HCT116 (cell line): ENCODE measurements at regions of chr19 and their contacts with region 1.

Region 1: DNA sequence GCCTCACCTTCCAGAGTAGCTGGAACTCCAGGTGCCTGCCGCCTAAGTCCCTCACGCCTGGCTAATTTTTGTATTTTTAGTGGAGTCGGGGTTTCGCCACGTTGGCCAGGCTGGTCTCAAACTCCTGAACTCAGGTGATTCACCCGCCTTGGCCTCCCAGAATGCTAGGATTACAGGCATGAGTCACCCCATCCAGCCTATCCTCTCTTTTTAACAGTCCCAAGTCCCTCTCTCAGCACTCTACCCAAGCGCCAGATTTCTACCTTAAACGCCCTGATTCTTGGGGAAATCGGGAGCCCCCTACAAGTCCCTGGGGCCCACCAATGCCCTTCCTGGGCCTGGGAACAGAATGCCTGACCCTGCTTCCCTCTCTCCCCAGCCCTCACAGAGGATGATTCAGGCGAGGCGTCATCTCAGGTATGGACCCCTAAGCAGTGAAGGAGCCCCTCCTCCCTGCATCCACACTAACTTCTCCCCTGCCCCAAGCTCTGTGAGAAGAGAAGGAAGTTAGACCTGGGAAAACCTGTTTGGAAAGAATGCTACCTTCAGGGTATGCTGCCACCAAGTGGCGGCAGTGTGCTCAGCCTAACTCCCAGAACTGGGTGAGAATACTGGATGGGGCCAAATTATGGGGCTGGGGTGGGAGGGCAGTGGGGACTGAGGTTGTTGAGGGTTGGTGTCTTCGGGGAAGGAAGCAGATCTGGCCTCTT is 20.8 kb upstream of the EBI3 start:
- DNase-seq: peak; percentile 66
- ATAC-seq: peak; percentile 77
- H3K4me3 ChIP-seq: peak overlapping the region; percentile 40 to 48
- H3K27ac ChIP-seq: peak overlapping the region; percentile 70
- H3K4me1 ChIP-seq: peaks cover 21 to 40% of the 10 kb centered on the region in 2 experiments
- H3K27me3 ChIP-seq: no peaks in the 10 kb centered on the region
- CTCF ChIP-seq: peak; percentile 76 to 78 (median 77)
- POLR2A ChIP-seq: no peak
- RAD21 ChIP-seq: peak; percentile 77

Region 2: DNA sequence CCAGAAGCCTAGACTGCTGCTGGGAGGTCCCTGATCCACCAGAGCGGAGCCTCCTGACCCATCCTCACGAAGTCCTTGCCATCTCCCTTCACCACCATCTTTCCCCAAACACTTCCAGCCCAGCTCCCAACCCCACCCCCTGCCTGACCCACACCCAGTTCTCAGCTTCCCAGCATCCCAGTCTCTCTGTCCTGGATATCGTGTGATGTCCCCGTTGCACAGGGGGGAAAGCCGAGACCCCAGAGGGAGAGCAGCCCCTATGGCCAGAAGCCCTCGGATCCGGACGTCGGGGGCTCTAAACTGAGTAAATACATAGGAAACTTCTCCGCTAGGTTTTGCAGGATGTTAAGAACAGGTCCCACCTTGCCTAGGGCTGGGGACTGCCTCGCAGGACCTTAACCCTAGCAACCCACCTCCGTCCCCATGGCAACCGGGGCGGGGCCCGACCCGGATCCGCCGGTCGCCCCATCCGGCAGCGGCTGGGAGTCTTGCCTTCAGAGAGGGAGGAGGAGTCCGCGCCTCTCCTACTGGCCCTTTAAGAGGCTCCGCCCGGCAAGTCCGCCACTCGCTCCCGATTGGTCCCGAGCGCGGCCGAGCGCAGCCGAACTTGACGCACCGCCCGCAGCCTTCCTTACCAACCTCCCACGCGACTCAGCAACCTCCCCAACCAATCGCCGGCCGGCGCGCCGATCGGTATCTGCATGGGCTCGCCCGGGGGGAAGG is 636.2 kb before region 1 on chr19:
- CTCF ChIA-PET with region 1: no interaction called
- POLR2A ChIA-PET with region 1: no interaction called
- RAD21 ChIA-PET with region 1: no interaction called
- intact Hi-C with region 1: loop called (anchors 10 kb)
- DNase-seq: peak; percentile 99
- ATAC-seq: peak; percentile 83
- H3K4me3 ChIP-seq: peak overlapping the region; percentile 36 to 98
- H3K27ac ChIP-seq: peak overlapping the region; percentile 67
- H3K4me1 ChIP-seq: peaks cover 39 to 71% of the 10 kb centered on the region in 2 experiments
- H3K27me3 ChIP-seq: no peaks in the 10 kb centered on the region
- CTCF ChIP-seq: no peak
- POLR2A ChIP-seq: no peak
- RAD21 ChIP-seq: no peak